HAP-1 (cell line): ENCODE measurements at regions of chr2 and their contacts with region 1.

Region 1: GRCh38 chr2:230007931-230008707 is 60.6 kb downstream of the SLC16A14 start:
- DNase-seq: peak; percentile 54 to 86
- H3K4me3 ChIP-seq: no peak overlapping the region
- H3K4me1 ChIP-seq: peaks cover 6% of the 10 kb centered on the region; the same call in 1 of the 2 replicates
- H3K27me3 ChIP-seq: no peaks in the 10 kb centered on the region

Region 2: GRCh38 chr2:229731916-229732315 is 276.2 kb before region 1 on chr2:
- in situ Hi-C with region 1: no loop called
- DNase-seq: no peak
- H3K4me3 ChIP-seq: no peak overlapping the region
- H3K4me1 ChIP-seq: peaks cover 16% of the 10 kb centered on the region
- H3K27me3 ChIP-seq: no peaks in the 10 kb centered on the region

Region 3: DNA sequence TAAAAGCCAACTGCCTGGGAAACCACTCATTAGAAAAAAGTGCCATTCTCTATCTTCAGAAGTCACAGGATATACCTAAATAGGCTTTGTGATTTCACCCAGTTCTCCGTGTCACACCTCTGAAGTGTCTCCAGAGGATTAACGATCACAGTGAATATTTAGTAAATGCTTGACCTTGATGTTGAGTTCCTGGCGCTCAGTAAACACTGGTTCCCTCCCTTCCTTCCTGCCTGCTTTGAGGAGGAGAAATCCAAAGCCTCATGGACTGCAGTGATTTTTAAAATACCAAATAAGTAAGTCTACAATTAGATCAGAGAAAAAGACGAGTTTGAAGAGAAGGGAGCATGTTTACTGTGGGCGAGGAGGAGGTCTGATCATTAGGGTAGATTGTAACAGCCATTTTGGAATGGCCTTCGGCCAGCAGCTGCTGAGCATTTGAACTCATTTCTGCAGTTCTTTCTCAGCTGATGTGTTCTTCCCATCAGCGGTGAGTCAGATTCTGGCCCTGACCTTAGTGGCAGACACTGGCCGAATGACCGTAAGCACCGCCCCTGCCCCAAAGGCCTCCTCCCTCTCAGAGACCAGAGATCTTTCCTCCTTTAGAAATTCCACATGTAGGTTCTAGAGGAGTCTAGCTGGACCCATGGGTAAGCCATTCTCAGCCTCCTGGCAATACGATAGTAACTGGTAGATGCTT is 122.7 kb after region 1 on chr2:
- in situ Hi-C with region 1: no loop called
- DNase-seq: no peak
- H3K4me3 ChIP-seq: no peak overlapping the region
- H3K4me1 ChIP-seq: no peaks in the 10 kb centered on the region
- H3K27me3 ChIP-seq: no peaks in the 10 kb centered on the region

Region 4: GRCh38 chr2:230160112-230160660 is 152.1 kb after region 1 on chr2:
- in situ Hi-C with region 1: loop called (anchors 10 kb)
- DNase-seq: peak; percentile 38 to 64
- H3K4me3 ChIP-seq: no peak overlapping the region
- H3K4me1 ChIP-seq: no peaks in the 10 kb centered on the region
- H3K27me3 ChIP-seq: no peaks in the 10 kb centered on the region

Region 5: DNA sequence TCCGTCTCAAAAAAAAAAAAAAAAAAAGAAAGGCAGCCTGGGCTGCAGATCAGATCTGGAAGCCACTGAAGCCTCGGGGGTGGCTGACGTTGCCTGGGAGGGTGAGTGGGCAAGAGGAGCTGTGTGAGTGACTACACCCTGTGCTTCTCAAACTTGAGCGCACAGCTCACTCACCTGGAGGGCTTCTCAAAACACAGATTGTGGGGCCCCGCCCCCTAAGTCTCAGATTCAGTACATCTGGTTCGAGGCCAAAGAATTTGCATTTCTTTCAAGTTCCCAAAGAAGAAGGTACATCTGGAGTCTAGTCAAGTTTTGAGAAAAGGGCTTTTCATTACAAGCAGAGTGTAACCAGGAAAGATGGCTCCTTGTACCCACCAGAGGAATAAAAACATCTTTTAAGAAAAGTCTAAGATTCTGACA is 606.8 kb after region 1 on chr2:
- in situ Hi-C with region 1: loop called (anchors 5 kb)
- DNase-seq: no peak
- H3K4me3 ChIP-seq: no peak overlapping the region
- H3K4me1 ChIP-seq: no peaks in the 10 kb centered on the region
- H3K27me3 ChIP-seq: no peaks in the 10 kb centered on the region